ENCODE measurements at regions of chr17 and their contacts with region 1.

Region 1: GRCh38 chr17:30588798-30589247 is 111.6 kb downstream of the GOSR1 start:
- DNase-seq: no peak
- ATAC-seq: no peak
- H3K4me3 ChIP-seq: no peak overlapping the region
- H3K4me3 Mint-ChIP-seq: no peak overlapping the region
- H3K27ac ChIP-seq: no peak overlapping the region
- H3K27ac Mint-ChIP-seq: no peak overlapping the region
- H3K4me1 ChIP-seq: no peaks in the 10 kb centered on the region
- H3K4me1 Mint-ChIP-seq: no peaks in the 10 kb centered on the region
- H3K27me3 ChIP-seq: no peaks in the 10 kb centered on the region
- H3K27me3 Mint-ChIP-seq: no peaks in the 10 kb centered on the region
- CTCF ChIP-seq: no peak

Region 2: GRCh38 chr17:30600049-30600829 is 11.4 kb after region 1 on chr17:
- CTCF ChIA-PET with region 1: no interaction called
- POLR2A ChIA-PET with region 1: no interaction called
- intact Hi-C with region 1: loop called in 1 of 2 experiments (anchors 1 kb)
- DNase-seq: peak; percentile 14 to 75 (median 44)
- ATAC-seq: peak; percentile 84
- H3K4me3 ChIP-seq: peak overlapping the region; percentile 76
- H3K4me3 Mint-ChIP-seq: peak overlapping the region; percentile 90
- H3K27ac ChIP-seq: no peak overlapping the region
- H3K27ac Mint-ChIP-seq: peak overlapping the region; percentile 79
- H3K4me1 ChIP-seq: peaks cover 12% of the 10 kb centered on the region
- H3K4me1 Mint-ChIP-seq: peaks cover 26% of the 10 kb centered on the region
- H3K27me3 ChIP-seq: no peaks in the 10 kb centered on the region
- H3K27me3 Mint-ChIP-seq: no peaks in the 10 kb centered on the region
- CTCF ChIP-seq: peak; percentile 39

Measured in CD4-positive, alpha-beta T cell (primary cell).